Posterior vena cava (tissue), 2 donors: ENCODE measurements at regions of chr20 and their contacts with region 1.

Region 1: DNA sequence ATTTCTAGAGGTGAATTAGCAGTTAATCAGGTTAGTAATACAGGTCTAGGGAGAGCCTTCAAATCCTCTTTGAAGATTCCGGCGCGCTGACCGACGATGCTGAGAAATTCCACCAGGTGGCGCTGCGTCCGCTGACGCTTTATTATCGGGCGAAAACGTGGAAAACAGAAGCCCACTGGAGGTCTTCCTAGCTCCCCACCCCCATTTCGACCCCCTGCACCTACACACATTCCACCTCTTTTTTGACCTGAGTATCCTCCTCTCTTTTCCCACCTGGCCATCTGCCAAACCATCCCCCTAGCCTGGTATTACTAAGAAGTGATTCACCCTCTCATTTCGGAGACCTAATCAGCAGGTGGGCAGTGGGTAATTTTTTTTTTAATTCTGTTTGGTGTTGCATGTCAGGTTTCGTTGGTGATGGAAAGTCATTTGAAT is 65.4 kb upstream of the RIN2 start:
- DNase-seq: peak; percentile 90

Region 2: GRCh38 chr20:18678549-18679419 is 1013.9 kb before region 1 on chr20:
- intact Hi-C with region 1: no loop called
- DNase-seq: no peak

Region 3: DNA sequence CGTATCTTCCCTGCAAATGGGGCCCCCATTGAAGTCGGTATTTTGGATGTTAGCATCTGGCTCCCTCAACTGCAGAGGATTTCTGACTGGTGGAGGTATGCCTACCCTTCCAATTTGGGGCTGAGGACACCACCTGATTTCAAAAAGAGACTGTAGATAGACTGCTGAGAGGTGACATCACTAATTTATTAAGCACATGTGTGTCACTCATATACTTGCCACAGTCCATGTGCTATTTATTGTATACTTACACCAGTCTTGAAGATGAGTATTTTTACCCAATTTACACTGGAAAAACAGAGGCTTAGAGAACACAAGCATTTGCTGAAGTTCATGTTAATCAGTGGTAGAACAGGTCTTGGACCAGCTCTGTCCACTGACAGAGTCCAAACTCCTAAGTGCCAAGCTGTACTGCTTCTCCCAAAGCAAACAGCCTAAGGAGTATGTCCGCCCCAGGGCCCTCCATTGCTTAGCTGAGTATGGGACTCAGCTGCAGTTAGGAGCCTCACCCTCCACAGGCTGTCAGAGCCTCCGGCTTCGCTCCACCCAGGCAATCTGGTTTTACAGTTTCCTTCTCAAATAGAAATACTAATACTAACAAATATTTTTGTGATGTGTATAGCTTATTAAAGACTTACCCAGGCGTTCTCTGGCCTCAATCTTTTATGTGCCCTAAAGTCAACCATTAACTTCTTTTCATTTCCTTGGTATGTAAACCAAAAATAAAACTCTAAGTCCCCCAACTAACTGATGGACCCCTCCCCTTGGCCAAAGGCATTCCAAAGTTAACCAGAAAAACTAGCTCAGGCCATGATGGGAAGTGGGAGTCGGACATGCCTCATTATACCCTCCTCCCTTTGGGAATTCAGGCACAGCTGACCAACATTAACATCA is 82.9 kb after region 1 on chr20:
- intact Hi-C with region 1: loop called in 1 of 2 experiments (anchors 10 kb)
- DNase-seq: no peak

Region 4: GRCh38 chr20:19981031-19981451 is 288.3 kb after region 1 on chr20:
- intact Hi-C with region 1: loop called in 1 of 2 experiments (anchors 5 kb)
- DNase-seq: no peak